ENCODE measurements at regions of chr6 and their contacts with region 1.

Region 1: GRCh38 chr6:84568971-84569370 is 195.4 kb downstream of the TBX18 start:
- DNase-seq: peak in 1 of 4 donors; percentile 18
- ATAC-seq: peak; percentile 73
- H3K4me3 ChIP-seq: no peak overlapping the region
- H3K27ac ChIP-seq: no peak overlapping the region
- H3K4me1 ChIP-seq: no peaks in the 10 kb centered on the region
- H3K27me3 ChIP-seq: no peaks in the 10 kb centered on the region
- CTCF ChIP-seq: no peak

Region 2: GRCh38 chr6:84411060-84411629 is 157.8 kb before region 1 on chr6:
- intact Hi-C with region 1: loop called in 1 of 2 experiments (anchors 10 kb)
- DNase-seq: no peak
- ATAC-seq: no peak
- H3K4me3 ChIP-seq: no peak overlapping the region
- H3K27ac ChIP-seq: no peak overlapping the region
- H3K4me1 ChIP-seq: no peaks in the 10 kb centered on the region
- H3K27me3 ChIP-seq: no peaks in the 10 kb centered on the region
- CTCF ChIP-seq: no peak